ENCODE measurements at regions of chr15 and their contacts with region 1.

Region 1: GRCh38 chr15:52481915-52482314 is 46.8 kb downstream of the MYO5A start:
- DNase-seq: peak; percentile 81
- ATAC-seq: peak; percentile 98
- H3K4me3 ChIP-seq: peak overlapping the region; percentile 14; the same call in 1 of the 2 replicates
- H3K27ac ChIP-seq: peak overlapping the region; percentile 76
- H3K4me1 ChIP-seq: peaks cover 36% of the 10 kb centered on the region
- H3K27me3 ChIP-seq: no peaks in the 10 kb centered on the region
- CTCF ChIP-seq: no peak
- EP300 ChIP-seq: peak in 1 of 2 experiments; percentile 73; a peak in 3 of 4 replicates
- POLR2A ChIP-seq: no peak
- RAD21 ChIP-seq: no peak

Region 2: DNA sequence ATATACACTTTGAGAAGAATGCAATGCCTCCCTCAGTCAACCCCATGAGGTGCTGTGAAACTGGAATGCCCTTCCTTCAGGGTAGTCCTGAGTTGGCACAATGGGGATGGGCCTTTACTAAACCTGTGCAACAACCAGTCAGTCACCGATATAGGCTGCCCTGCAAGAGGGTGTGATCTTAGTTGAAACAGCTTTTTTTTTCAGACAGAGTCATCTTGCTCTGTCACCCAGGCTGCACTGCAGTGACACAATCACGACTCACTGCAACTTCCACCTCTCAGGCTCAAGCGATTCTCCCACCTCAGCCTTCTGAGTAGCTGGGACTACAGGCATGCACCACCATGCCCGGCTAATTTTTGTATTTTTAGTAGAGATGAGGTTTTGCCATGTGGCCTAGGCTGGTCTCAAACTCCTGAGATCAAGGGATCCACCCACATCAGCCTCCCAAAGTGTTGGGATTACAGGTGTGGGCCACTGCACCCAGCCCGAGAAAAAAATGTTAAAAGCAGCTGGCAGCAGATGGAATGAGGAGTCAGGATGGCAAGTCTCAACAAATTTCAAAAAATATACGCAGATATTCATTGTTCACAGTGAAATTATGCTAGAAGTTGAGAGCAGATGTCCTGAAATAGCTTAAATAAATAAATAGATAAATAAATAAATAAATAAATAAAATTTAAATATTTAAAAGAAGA is 15.0 kb after region 1 on chr15:
- CTCF ChIA-PET with region 1: interaction called, 4 read pairs
- POLR2A ChIA-PET with region 1: interaction called, 5 read pairs
- RAD21 ChIA-PET with region 1: no interaction called
- SMC1A ChIA-PET with region 1: interaction called, 17 read pairs
- in situ Hi-C with region 1: no loop called
- intact Hi-C with region 1: no loop called
- DNase-seq: no peak
- ATAC-seq: peak; percentile 70
- H3K4me3 ChIP-seq: no peak overlapping the region
- H3K27ac ChIP-seq: no peak overlapping the region
- H3K4me1 ChIP-seq: no peaks in the 10 kb centered on the region; the same call in 1 of the 2 replicates
- H3K27me3 ChIP-seq: no peaks in the 10 kb centered on the region
- CTCF ChIP-seq: no peak
- EP300 ChIP-seq: no peak
- POLR2A ChIP-seq: no peak
- RAD21 ChIP-seq: no peak

Region 3: DNA sequence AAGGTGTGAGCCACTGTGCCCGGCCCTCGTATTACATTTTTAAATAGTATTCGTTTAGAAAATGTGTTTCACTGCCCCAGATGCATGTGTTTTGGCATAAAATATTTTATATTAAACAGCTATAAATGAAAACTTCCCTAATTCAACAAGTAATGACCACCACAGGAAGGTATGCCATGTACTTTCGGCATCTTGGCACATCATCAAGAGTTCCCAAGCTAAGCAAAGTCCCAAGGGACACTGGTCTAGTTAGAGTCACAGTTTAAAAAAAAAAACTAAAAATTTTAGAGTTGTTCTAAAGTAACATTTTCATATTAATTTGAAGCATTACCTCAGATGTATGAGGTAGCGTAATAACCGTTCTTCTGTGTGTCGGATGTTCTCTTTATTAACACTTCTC is 102.5 kb after region 1 on chr15:
- CTCF ChIA-PET with region 1: no interaction called
- POLR2A ChIA-PET with region 1: no interaction called
- RAD21 ChIA-PET with region 1: no interaction called
- SMC1A ChIA-PET with region 1: no interaction called
- in situ Hi-C with region 1: no loop called
- intact Hi-C with region 1: no loop called
- DNase-seq: no peak
- ATAC-seq: no peak
- H3K4me3 ChIP-seq: no peak overlapping the region
- H3K27ac ChIP-seq: no peak overlapping the region
- H3K4me1 ChIP-seq: no peaks in the 10 kb centered on the region
- H3K27me3 ChIP-seq: no peaks in the 10 kb centered on the region
- CTCF ChIP-seq: no peak
- EP300 ChIP-seq: no peak
- POLR2A ChIP-seq: no peak
- RAD21 ChIP-seq: no peak

Measured in GM12878 (cell line).